ENCODE measurements at regions of chr2 and their contacts with region 1.

Region 1: DNA sequence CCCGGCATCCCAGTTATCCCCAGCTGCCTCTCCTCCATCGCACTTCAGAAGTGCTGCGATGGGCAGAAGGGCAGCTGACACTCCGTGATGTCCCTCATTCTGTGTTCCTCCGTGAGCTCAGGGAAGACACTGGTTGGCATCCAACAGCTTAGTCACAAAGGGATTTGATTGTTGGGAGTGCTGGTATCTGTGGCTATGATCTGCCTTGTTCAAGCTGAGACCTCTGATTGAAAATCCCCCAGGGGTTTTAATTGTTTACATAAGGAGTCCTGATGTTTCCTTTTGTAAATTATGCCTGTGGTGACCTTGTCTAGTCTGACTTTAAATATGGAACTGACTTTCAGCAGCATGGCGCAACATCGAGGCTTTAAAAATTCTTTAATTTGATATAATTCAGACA is 18.9 kb upstream of the SAG start:
- DNase-seq: peak in 4 of 10 donors; percentile 17 to 57 (median 52)
- H3K4me3 ChIP-seq: peak overlapping the region in 7 of 59 donors; percentile 0 to 40 (median 7)
- H3K27ac ChIP-seq: peak overlapping the region in 55 of 59 donors; percentile 2 to 90 (median 70)
- H3K27me3 ChIP-seq: no peaks in the 10 kb centered on the region
- CTCF ChIP-seq: peak in 1 of 56 donors; percentile 6

Region 2: GRCh38 chr2:233443468-233444183 is 154.9 kb after region 1 on chr2:
- intact Hi-C with region 1: loop called in 1 of 2 experiments (anchors 10 kb)
- DNase-seq: peak; percentile 60 to 88 (median 78)
- H3K4me3 ChIP-seq: no peak overlapping the region
- H3K27ac ChIP-seq: peak overlapping the region in 3 of 59 donors; percentile 18 to 66 (median 35)
- H3K27me3 ChIP-seq: no peaks in the 10 kb centered on the region
- CTCF ChIP-seq: peak; percentile 63 to 90 (median 81)

Region 3: GRCh38 chr2:233966388-233966787 is 677.7 kb after region 1 on chr2:
- intact Hi-C with region 1: no loop called
- DNase-seq: peak in 8 of 10 donors; percentile 39 to 70 (median 58)
- H3K4me3 ChIP-seq: peak overlapping the region in 1 of 59 donors; percentile 6
- H3K27ac ChIP-seq: peak overlapping the region in 15 of 59 donors; percentile 19 to 64 (median 44)
- H3K27me3 ChIP-seq: no peaks in the 10 kb centered on the region
- CTCF ChIP-seq: peak in 5 of 56 donors; percentile 6 to 21 (median 14)